ENCODE measurements at regions of chr1 and their contacts with region 1.

Region 1: GRCh38 chr1:33633019-33633801 is 160.8 kb downstream of the ZSCAN20 start:
- DNase-seq: peak; percentile 88 to 96 (median 94)
- H3K4me3 ChIP-seq: no peak overlapping the region
- H3K27ac ChIP-seq: no peak overlapping the region
- H3K4me1 ChIP-seq: no peaks in the 10 kb centered on the region
- H3K27me3 ChIP-seq: no peaks in the 10 kb centered on the region
- CTCF ChIP-seq: peak; percentile 83 to 96 (median 86)
- POLR2A ChIP-seq: no peak

Region 2: GRCh38 chr1:34066981-34067603 is 433.9 kb after region 1 on chr1:
- intact Hi-C with region 1: no loop called
- DNase-seq: no peak
- H3K4me3 ChIP-seq: no peak overlapping the region
- H3K27ac ChIP-seq: no peak overlapping the region
- H3K4me1 ChIP-seq: no peaks in the 10 kb centered on the region
- H3K27me3 ChIP-seq: no peaks in the 10 kb centered on the region
- CTCF ChIP-seq: no peak
- POLR2A ChIP-seq: no peak

Region 3: GRCh38 chr1:34162852-34163766 is 529.9 kb after region 1 on chr1:
- intact Hi-C with region 1: loop called in 1 of 2 experiments (anchors 5 kb)
- DNase-seq: peak; percentile 79 to 90 (median 86)
- H3K4me3 ChIP-seq: peak overlapping the region in 3 of 4 donors; percentile 10 to 56 (median 29)
- H3K27ac ChIP-seq: no peak overlapping the region
- H3K4me1 ChIP-seq: peaks cover 14 to 18% of the 10 kb centered on the region in 2 donors
- H3K27me3 ChIP-seq: no peaks in the 10 kb centered on the region
- CTCF ChIP-seq: peak; percentile 57 to 77 (median 74)
- POLR2A ChIP-seq: peak in 1 of 2 donors; percentile 45

Region 4: GRCh38 chr1:34597877-34598514 is 964.8 kb after region 1 on chr1:
- intact Hi-C with region 1: loop called in 1 of 2 experiments (anchors 5 kb)
- DNase-seq: peak; percentile 73 to 87 (median 83)
- H3K4me3 ChIP-seq: no peak overlapping the region
- H3K27ac ChIP-seq: no peak overlapping the region
- H3K4me1 ChIP-seq: no peaks in the 10 kb centered on the region
- H3K27me3 ChIP-seq: no peaks in the 10 kb centered on the region
- CTCF ChIP-seq: peak; percentile 78 to 91 (median 84)
- POLR2A ChIP-seq: no peak

Measured in adrenal gland (tissue), 19 donors.